ENCODE measurements at regions of chr6 and their contacts with region 1.

Region 1: DNA sequence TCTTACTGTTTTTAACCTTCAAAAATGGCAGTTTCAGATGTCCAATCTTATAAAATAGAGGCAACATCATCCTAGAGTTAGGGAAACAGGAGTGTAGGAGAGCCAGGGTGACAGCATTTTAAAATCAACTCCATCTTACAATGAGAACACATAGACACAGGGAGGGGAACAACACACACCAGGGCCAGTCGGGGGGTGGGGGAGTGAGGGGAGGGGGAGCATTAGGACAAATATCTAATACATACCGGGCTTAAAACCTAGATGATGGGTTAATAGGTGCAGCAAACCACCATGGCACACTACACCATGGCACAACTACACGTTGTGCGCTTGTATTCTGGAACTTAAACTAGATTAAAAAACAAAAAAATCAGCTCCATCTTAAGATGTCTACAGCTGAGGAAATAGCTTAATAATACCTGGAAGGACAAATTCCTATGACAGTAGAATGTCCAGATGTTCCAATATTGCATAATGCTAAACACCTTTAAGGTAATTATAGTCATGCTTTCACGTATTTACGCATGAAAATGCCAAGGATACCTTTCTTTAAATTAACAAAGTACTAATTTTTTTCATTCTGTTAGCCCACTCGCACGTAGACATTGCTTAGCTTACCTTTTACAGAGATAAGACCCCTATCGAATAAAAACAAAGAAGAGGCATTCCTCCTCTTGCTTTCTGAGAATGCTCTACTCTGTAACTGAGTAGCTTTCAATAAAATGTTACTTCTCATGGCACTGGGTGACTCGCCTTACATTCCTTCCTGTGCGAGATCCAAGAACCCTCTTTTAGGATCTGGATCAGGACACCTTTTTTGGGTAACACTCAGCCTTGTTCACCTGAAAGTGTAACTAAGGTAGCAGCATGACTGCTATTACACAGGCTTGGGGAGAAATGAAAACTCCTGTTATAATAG is 4.3 kb upstream of the GSTA4 start:
- DNase-seq: no peak
- H3K4me3 ChIP-seq: no peak overlapping the region
- H3K27ac ChIP-seq: no peak overlapping the region
- H3K4me1 ChIP-seq: peaks cover 6 to 14% (median 8%) of the 10 kb centered on the region in 4 donors
- H3K27me3 ChIP-seq: no peaks in the 10 kb centered on the region
- CTCF ChIP-seq: no peak
- EP300 ChIP-seq: no peak
- POLR2A ChIP-seq: no peak

Region 2: GRCh38 chr6:53059648-53060589 is 60.6 kb after region 1 on chr6:
- intact Hi-C with region 1: loop called (anchors 5 kb)
- DNase-seq: no peak
- H3K4me3 ChIP-seq: peak overlapping the region; percentile 73 to 89 (median 87)
- H3K27ac ChIP-seq: peak overlapping the region in 4 of 5 donors; percentile 92 to 98 (median 94)
- H3K4me1 ChIP-seq: peaks cover 47 to 87% (median 72%) of the 10 kb centered on the region in 4 donors
- H3K27me3 ChIP-seq: no peaks in the 10 kb centered on the region
- CTCF ChIP-seq: no peak
- EP300 ChIP-seq: no peak
- POLR2A ChIP-seq: no peak

Measured in stomach (tissue), 19 donors.